Activated CD4-positive, alpha-beta T cell treated with anti-CD3 and anti-CD28 coated beads for 36 hours (primary cell): ENCODE measurements at regions of chr3 and their contacts with region 1.

Region 1: DNA sequence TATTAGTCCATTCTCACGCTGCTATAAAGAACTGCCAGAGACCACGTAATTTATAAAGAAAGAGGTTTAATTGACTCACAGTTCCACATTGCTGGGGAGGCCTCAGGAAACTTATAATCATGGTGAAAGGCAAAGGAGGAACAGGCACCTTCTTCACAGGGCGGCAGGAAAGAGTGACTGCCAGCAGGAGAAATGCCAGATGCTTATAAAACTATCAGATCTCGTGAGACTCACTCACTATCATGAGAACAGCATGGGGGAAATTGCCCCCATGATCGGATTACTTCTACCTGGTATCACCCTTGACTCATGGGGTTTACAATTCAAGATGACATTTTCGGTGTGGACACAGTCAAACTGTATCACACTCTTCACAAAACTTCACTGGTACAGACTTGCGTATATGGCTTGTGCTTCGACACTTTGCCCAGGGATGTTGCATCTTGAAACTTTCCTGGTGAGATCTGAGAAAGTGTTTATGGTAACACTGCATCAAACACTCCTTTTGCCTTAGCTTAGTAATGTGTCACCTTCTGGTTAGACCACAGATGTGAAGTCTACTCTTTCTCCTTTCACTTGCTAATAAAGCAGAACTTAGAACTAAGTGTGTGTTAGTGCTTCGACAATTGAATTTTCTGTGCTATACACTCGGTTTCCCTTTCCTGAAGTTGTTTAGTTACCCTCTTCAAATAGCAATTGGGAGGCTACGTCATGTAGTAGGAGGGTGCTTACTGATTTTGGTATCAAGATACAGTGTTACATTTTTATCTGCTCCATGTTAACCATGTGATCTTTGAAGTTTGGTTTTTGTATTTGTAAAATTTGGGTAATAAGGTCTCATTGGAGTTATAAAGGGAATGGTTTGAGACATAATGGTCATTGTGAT is 185.7 kb downstream of the LPP start:
- DNase-seq: peak; percentile 76
- ATAC-seq: peak; percentile 89
- H3K4me3 Mint-ChIP-seq: peak overlapping the region; percentile 54
- H3K27ac Mint-ChIP-seq: peak overlapping the region; percentile 95
- H3K4me1 Mint-ChIP-seq: peaks cover 43% of the 10 kb centered on the region
- H3K27me3 Mint-ChIP-seq: no peaks in the 10 kb centered on the region

Region 2: GRCh38 chr3:187974871-187975271 is 364.8 kb before region 1 on chr3:
- CTCF ChIA-PET with region 1: no interaction called
- POLR2A ChIA-PET with region 1: no interaction called
- intact Hi-C with region 1: loop called in 1 of 2 experiments (anchors 1 kb)
- DNase-seq: no peak
- ATAC-seq: peak; percentile 61
- H3K4me3 Mint-ChIP-seq: peak overlapping the region; percentile 57
- H3K27ac Mint-ChIP-seq: peak overlapping the region; percentile 90
- H3K4me1 Mint-ChIP-seq: peaks cover 57% of the 10 kb centered on the region
- H3K27me3 Mint-ChIP-seq: no peaks in the 10 kb centered on the region

Region 3: GRCh38 chr3:188286087-188286513 is 53.6 kb before region 1 on chr3:
- CTCF ChIA-PET with region 1: interaction called, 7 read pairs
- POLR2A ChIA-PET with region 1: interaction called, 11 read pairs
- intact Hi-C with region 1: loop called (anchors 1 to 2 kb)
- DNase-seq: peak; percentile 29
- ATAC-seq: no peak
- H3K4me3 Mint-ChIP-seq: no peak overlapping the region
- H3K27ac Mint-ChIP-seq: peak overlapping the region; percentile 72
- H3K4me1 Mint-ChIP-seq: peaks cover 55% of the 10 kb centered on the region
- H3K27me3 Mint-ChIP-seq: no peaks in the 10 kb centered on the region

Region 4: DNA sequence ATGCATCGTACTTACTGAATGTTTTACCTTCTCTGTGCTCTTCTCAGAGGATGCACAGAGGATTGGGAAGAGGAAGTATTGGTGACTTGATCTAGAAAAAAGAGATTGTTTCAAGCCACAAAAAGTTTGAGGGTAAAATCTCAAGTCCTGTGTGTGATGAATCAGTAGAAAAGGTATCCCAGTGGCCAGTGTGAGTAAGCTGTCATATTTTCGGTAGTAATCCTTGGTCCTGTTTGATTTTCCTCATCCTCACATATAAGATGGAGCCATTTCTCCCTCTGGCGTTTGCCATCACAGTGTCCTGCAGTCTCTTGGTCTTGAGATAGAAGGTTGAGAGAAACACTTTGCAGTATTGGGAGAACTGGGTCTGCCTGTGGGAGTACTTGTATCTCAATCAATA is 18.9 kb before region 1 on chr3:
- CTCF ChIA-PET with region 1: interaction called, 8 read pairs
- POLR2A ChIA-PET with region 1: interaction called, 8 read pairs
- intact Hi-C with region 1: loop called (anchors 1 kb)
- DNase-seq: no peak
- ATAC-seq: no peak
- H3K4me3 Mint-ChIP-seq: no peak overlapping the region
- H3K27ac Mint-ChIP-seq: no peak overlapping the region
- H3K4me1 Mint-ChIP-seq: peaks cover 63% of the 10 kb centered on the region
- H3K27me3 Mint-ChIP-seq: peaks cover 3% of the 10 kb centered on the region

Region 5: DNA sequence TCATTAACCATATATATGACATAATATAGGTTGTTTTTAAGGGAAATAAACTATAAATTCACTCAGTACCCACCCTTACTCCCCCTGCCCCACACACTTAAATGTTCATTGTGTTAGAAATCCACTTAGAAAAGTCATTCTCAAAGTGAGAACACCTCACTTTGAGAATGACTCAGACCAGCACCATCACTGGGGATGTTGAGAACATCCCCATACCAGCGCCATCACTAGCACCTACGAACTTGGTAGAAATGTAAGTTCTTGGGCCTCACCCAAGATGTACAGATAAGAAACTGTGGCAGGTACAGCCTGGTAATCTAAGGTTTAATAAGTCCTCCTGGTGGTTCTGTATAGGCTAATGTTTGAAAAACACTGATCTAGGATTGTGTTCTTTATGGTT is 176.9 kb after region 1 on chr3:
- CTCF ChIA-PET with region 1: no interaction called
- POLR2A ChIA-PET with region 1: no interaction called
- intact Hi-C with region 1: loop called in 1 of 2 experiments (anchors 5 kb)
- DNase-seq: peak; percentile 56
- ATAC-seq: peak; percentile 98
- H3K4me3 Mint-ChIP-seq: no peak overlapping the region
- H3K27ac Mint-ChIP-seq: peak overlapping the region; percentile 21
- H3K4me1 Mint-ChIP-seq: peaks cover 14% of the 10 kb centered on the region
- H3K27me3 Mint-ChIP-seq: no peaks in the 10 kb centered on the region

Region 6: GRCh38 chr3:188664795-188665194 is 325.1 kb after region 1 on chr3:
- CTCF ChIA-PET with region 1: no interaction called
- POLR2A ChIA-PET with region 1: no interaction called
- intact Hi-C with region 1: no loop called
- DNase-seq: peak; percentile 27
- ATAC-seq: peak; percentile 66
- H3K4me3 Mint-ChIP-seq: no peak overlapping the region
- H3K27ac Mint-ChIP-seq: no peak overlapping the region
- H3K4me1 Mint-ChIP-seq: peaks cover 10% of the 10 kb centered on the region
- H3K27me3 Mint-ChIP-seq: no peaks in the 10 kb centered on the region

Region 7: DNA sequence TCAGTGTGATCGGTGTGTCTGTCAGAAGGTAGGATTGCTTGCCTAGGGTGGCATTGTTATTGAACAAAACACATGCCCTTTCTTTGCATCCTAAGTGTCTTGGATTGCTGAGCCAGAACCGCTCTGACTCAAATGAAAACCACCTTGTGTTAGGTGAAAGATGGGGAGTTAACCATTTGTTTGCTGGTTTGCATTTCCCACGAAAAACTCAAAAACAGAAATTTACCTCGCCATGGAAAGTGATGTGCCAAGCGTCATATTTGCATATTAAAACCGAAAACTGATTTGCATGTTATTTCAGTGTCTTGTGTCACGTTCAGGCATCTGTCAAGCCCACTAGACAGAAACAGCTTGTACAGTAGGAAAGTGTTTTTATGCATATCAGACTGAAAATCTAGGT is 357.5 kb after region 1 on chr3:
- CTCF ChIA-PET with region 1: interaction called, 4 read pairs
- POLR2A ChIA-PET with region 1: no interaction called
- intact Hi-C with region 1: loop called (anchors 1 kb)
- DNase-seq: peak; percentile 54
- ATAC-seq: peak; percentile 42
- H3K4me3 Mint-ChIP-seq: no peak overlapping the region
- H3K27ac Mint-ChIP-seq: no peak overlapping the region
- H3K4me1 Mint-ChIP-seq: peaks cover 47% of the 10 kb centered on the region
- H3K27me3 Mint-ChIP-seq: peaks cover 2% of the 10 kb centered on the region

Region 8: DNA sequence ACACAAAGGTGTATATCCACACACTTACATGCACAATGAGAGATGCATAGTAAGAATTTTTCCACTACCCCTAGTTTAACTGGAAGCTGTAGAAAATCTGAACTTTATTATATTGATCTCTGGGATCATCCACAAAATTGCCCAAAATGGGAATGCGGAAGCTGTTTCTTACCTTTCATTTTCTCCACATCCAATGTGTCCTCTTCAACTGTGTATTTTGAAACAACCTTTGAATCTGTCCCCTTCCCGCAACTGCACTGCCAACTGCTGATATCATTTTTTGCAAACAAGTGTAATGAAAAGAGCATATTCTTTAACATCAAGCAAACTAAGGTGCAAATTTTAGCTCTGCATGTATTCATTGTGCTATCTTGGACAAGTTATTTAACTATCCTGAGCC is 404.5 kb after region 1 on chr3:
- CTCF ChIA-PET with region 1: no interaction called
- POLR2A ChIA-PET with region 1: no interaction called
- intact Hi-C with region 1: no loop called
- DNase-seq: no peak
- ATAC-seq: no peak
- H3K4me3 Mint-ChIP-seq: no peak overlapping the region
- H3K27ac Mint-ChIP-seq: no peak overlapping the region
- H3K4me1 Mint-ChIP-seq: no peaks in the 10 kb centered on the region
- H3K27me3 Mint-ChIP-seq: no peaks in the 10 kb centered on the region